GM18951 (cell line): ENCODE measurements at regions of chr4 and their contacts with region 1.

Region 1: DNA sequence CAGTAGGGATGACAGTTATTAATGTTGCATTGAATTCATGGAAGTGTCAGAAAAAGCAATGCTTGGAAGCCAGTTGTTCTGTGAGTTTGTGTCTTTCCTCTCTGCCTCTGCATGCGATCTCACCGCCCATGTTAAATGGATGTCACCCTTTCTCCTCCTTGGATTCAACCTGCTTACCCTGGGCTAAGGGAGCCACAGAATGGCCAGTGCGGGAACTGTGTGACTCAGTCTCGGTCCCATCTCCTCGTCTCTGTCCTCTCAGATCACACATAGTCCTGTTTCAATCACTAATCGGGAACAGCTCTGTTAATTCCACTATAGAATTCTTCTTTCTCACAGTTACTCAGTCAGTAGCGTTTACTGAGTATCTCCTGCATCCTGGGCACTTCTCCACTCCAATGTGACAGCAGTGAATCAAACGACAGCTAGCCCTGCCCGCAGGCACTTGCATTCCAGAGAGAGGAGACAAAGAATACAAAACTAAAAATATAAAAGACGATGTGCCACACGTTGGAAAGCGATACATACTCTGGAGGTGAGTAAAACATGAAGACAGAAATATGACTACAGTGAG is 53.7 kb upstream of the TLR3 start:
- POLR2A ChIP-seq: no peak

Region 2: GRCh38 chr4:185625503-185625902 is 389.8 kb before region 1 on chr4:
- in situ Hi-C with region 1: loop called (anchors 10 kb)
- POLR2A ChIP-seq: no peak

Region 3: GRCh38 chr4:185782523-185782922 is 232.8 kb before region 1 on chr4:
- in situ Hi-C with region 1: no loop called
- POLR2A ChIP-seq: no peak

Region 4: DNA sequence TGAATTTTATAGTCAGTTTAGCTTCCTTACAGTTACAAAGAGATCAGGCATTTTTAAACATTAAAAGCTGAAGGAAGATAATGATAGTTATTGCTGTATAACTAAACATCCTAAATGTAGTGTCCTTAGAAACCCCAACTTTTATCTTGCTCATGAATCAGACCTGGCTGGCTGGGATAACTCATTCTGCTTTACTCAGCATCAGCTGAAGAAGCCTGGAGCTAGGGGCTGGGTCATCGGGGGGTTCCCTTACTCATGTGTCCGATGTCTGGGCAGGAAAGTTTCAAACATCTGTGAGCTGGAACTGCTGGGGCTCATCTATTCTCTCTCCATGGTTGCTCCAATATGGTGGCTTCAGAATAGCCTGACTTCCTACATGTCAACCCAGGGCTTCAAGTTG is 426.2 kb after region 1 on chr4:
- in situ Hi-C with region 1: no loop called
- POLR2A ChIP-seq: no peak